Right ventricle myocardium inferior (tissue), 1 donor: ENCODE measurements at regions of chr2 and their contacts with region 1.

Region 1: DNA sequence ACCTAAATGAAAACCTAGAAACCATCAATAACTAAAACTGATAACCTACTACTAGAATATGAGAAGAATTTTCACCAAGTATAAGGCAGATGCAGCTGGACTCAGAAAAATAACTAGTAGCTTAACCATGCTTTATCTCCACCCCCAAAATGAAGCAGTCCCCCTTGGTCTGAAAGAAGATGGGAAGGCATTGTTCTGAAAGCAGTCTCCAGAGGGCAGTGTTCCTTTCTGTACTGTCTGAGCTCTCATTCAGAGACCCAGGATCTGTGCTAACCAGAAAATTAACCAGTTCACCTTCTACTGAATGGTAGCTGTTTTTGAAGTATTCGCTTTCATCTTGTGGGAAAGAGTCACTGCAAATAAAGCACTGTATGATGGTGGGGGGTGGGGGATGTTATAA is 273.0 kb downstream of the PDE11A start:
- DNase-seq: no peak
- ATAC-seq: peak; percentile 34

Region 2: GRCh38 chr2:177882501-177882900 is 83.0 kb after region 1 on chr2:
- intact Hi-C with region 1: loop called (anchors 1 kb)
- DNase-seq: no peak
- ATAC-seq: peak; percentile 46

Region 3: GRCh38 chr2:177900082-177900481 is 100.6 kb after region 1 on chr2:
- intact Hi-C with region 1: loop called (anchors 5 kb)
- DNase-seq: no peak
- ATAC-seq: no peak

Region 4: GRCh38 chr2:177917169-177917568 is 117.6 kb after region 1 on chr2:
- intact Hi-C with region 1: loop called (anchors 5 kb)
- DNase-seq: peak; percentile 27
- ATAC-seq: peak; percentile 79

Region 5: GRCh38 chr2:177983183-177983788 is 183.8 kb after region 1 on chr2:
- intact Hi-C with region 1: no loop called
- DNase-seq: no peak
- ATAC-seq: no peak

Region 6: GRCh38 chr2:178018141-178018540 is 218.6 kb after region 1 on chr2:
- intact Hi-C with region 1: no loop called
- DNase-seq: no peak
- ATAC-seq: no peak

Region 7: GRCh38 chr2:178069551-178069950 is 270.0 kb after region 1 on chr2:
- intact Hi-C with region 1: loop called (anchors 2 kb)
- DNase-seq: no peak
- ATAC-seq: no peak

Region 8: DNA sequence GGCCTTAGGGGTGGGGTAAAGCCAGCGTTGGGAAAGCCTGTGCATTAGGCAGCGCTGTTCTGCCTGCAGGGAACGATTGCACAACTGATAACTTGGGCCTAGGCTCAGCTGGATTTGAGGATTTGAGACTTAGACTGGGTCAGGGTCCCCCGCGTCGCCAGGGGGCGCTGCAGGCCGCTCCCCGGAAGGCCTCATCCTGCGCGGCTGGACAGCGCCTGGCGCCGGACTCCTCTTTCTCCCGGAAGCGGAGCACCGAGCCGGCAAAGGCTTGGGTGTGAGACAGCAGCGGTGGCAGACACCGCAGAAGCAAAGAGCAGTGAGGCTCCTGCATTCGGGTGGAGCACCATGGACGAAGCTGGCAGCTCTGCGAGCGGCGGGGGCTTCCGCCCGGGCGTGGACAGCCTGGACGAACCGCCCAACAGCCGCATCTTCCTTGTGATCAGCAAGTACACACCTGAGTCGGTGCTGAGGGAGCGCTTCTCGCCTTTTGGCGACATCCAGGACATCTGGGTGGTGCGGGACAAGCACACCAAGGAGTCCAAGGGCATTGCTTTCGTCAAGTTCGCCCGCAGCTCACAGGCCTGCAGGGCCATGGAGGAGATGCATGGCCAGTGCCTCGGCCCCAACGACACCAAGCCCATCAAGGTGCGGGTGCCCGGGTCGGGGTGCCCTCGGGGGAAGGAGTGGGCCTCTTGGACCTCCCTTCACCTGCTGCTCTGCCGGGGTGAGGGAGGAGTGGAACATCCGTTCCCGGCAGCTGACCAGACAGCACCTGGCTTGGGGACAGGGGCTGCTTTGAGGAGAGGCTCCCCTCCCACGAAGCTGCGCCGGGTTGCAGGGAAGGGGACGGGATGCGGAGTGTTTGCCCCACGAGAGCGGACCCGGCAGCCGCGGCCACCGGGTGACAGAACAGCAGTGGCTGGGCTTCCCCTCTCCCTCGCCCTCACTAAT is 312.9 kb after region 1 on chr2 and contains the start of gene RBM45:
- intact Hi-C with region 1: loop called (anchors 5 kb)
- DNase-seq: peak; percentile 96
- ATAC-seq: peak; percentile 98
- total RNA-seq, gene RBM45: 5.6 TPM